Heart right ventricle (tissue), 16 donors: ENCODE measurements at regions of chr5 and their contacts with region 1.

Region 1: DNA sequence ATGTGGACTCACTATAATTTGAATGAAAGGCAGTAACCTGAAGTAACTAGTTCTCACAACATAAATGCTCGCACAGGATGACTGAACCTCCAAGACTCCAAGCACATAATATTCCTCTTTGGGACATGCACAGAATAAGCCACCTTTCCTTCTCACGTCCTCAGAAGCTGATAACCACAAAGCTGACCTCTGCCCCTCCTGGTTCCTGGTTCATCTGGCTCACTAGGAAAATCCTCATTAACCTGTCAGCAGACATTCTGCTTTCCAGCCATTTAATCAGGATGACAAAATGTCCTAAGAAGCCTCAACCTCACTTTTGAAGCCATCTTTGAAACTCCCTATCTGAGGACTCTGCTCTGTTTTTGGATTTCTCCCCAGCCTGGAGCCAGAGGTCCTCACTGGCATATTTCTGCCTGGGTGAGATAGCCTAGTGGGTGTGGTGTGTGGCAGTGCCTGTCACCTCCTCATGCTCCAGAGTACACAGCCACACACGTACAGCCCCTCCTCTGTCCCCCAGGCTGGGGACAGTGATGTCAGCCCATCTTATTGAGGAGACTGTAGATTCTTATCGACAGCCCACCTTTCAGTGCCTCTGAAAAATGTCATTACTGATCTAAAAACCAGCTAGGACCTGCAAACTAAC is 10.3 kb downstream of the ANKH start:
- DNase-seq: no peak
- ATAC-seq: peak in 7 of 8 donors; percentile 60 to 85 (median 70)
- H3K4me3 ChIP-seq: no peak overlapping the region
- H3K27ac ChIP-seq: peak overlapping the region in 7 of 10 donors; percentile 15 to 69 (median 67)
- H3K4me1 ChIP-seq: peaks cover 0 to 77% (median 47%) of the 10 kb centered on the region in 9 donors
- H3K27me3 ChIP-seq: no peaks in the 10 kb centered on the region
- CTCF ChIP-seq: no peak

Region 2: GRCh38 chr5:14809369-14810155 is 51.7 kb before region 1 on chr5:
- intact Hi-C with region 1: loop called in 1 of 10 experiments (anchors 5 kb)
- DNase-seq: peak; percentile 34 to 66
- ATAC-seq: peak; percentile 63 to 84 (median 70)
- H3K4me3 ChIP-seq: peak overlapping the region in 3 of 10 donors; percentile 1 to 27 (median 6)
- H3K27ac ChIP-seq: peak overlapping the region in 8 of 10 donors; percentile 44 to 94 (median 70)
- H3K4me1 ChIP-seq: peaks cover 7 to 72% (median 53%) of the 10 kb centered on the region in 9 donors
- H3K27me3 ChIP-seq: no peaks in the 10 kb centered on the region
- CTCF ChIP-seq: no peak

Region 3: GRCh38 chr5:14830210-14831005 is 30.8 kb before region 1 on chr5:
- intact Hi-C with region 1: loop called in 1 of 10 experiments (anchors 1 kb)
- DNase-seq: peak in 1 of 2 donors; percentile 42
- ATAC-seq: peak in 7 of 8 donors; percentile 35 to 77 (median 47)
- H3K4me3 ChIP-seq: no peak overlapping the region
- H3K27ac ChIP-seq: no peak overlapping the region
- H3K4me1 ChIP-seq: peaks cover 8 to 71% (median 30%) of the 10 kb centered on the region in 9 donors
- H3K27me3 ChIP-seq: no peaks in the 10 kb centered on the region
- CTCF ChIP-seq: no peak

Region 4: DNA sequence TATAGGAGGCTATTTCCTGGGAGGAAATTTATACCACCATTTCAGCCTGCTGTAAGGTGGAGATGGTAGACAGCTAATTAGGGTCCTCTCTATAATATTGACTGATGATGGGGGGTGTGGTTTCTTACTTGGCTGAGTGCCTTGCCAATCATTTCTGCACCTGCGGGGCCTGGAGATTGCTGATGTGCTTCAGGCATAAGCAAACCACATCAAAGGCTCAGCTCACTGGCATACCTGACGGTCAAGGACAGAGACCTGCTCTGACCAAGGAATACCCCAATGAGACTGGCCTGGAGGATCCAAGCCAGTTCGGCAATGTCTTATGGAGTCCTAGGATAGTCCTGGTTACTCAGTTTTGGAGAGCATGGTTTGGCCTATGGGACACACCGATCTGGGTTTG is 19.1 kb before region 1 on chr5:
- intact Hi-C with region 1: no loop called
- DNase-seq: no peak
- ATAC-seq: peak in 2 of 8 donors; percentile 27 to 33
- H3K4me3 ChIP-seq: no peak overlapping the region
- H3K27ac ChIP-seq: no peak overlapping the region
- H3K4me1 ChIP-seq: peaks cover 0 to 12% (median 0%) of the 10 kb centered on the region in 9 donors
- H3K27me3 ChIP-seq: no peaks in the 10 kb centered on the region
- CTCF ChIP-seq: no peak